Heart right ventricle (tissue), 16 donors: ENCODE measurements at regions of chr17 and their contacts with region 1.

Region 1: GRCh38 chr17:81959362-81960129 is 1.4 kb downstream of the NOTUM start:
- DNase-seq: peak; percentile 48 to 81
- ATAC-seq: peak; percentile 81 to 93 (median 88)
- H3K4me3 ChIP-seq: peak overlapping the region; percentile 25 to 53 (median 40)
- H3K27ac ChIP-seq: no peak overlapping the region
- H3K4me1 ChIP-seq: peaks cover 0 to 24% (median 13%) of the 10 kb centered on the region in 9 donors
- H3K27me3 ChIP-seq: peaks cover 33 to 81% (median 67%) of the 10 kb centered on the region in 7 donors
- CTCF ChIP-seq: peak; percentile 54 to 97 (median 73)

Region 2: GRCh38 chr17:82020891-82021727 is 61.6 kb after region 1 on chr17:
- intact Hi-C with region 1: loop called (anchors 1 to 5 kb)
- DNase-seq: peak; percentile 62 to 71
- ATAC-seq: peak in 5 of 8 donors; percentile 2 to 28 (median 15)
- H3K4me3 ChIP-seq: peak overlapping the region in 4 of 10 donors; percentile 75 to 100 (median 90)
- H3K27ac ChIP-seq: peak overlapping the region in 1 of 10 donors; percentile 87
- H3K4me1 ChIP-seq: peaks cover 19 to 34% (median 29%) of the 10 kb centered on the region in 9 donors
- H3K27me3 ChIP-seq: no peaks in the 10 kb centered on the region
- CTCF ChIP-seq: peak; percentile 47 to 75 (median 67)

Region 3: DNA sequence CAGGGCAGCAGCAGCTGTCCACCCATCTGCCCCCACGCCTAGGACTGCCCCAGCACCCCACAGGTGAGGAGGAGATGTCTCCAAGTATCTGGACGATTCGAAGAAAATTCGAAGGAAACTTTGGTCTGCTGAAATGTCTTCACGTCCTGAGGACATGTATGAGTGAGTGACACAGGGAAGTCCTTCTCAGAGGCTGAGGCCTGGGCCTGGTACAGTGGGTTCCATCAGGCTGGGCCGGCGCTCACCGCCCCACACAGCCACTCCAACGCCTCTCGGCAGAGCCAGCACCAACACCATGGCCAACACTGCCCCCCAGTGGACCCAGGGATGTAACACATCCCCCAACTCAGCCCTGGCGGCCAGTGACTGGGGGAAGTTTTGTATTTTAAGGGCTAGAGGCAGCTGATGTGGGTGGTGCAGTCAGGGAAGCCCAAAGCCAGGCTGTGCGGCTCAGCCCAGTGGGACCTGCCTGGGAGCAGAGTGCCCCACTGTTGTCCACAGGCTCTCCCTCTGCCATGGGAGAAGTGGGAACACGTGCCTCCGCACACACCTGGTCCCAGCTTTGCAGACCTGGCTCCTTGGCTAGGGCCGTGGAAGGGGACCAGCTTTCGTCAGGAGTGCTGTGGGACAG is 194.3 kb after region 1 on chr17:
- intact Hi-C with region 1: loop called (anchors 2 to 10 kb)
- DNase-seq: peak; percentile 70 to 79
- ATAC-seq: peak; percentile 83 to 94 (median 91)
- H3K4me3 ChIP-seq: no peak overlapping the region
- H3K27ac ChIP-seq: no peak overlapping the region
- H3K4me1 ChIP-seq: no peaks in the 10 kb centered on the region
- H3K27me3 ChIP-seq: no peaks in the 10 kb centered on the region
- CTCF ChIP-seq: peak; percentile 81 to 96 (median 88)

Region 4: DNA sequence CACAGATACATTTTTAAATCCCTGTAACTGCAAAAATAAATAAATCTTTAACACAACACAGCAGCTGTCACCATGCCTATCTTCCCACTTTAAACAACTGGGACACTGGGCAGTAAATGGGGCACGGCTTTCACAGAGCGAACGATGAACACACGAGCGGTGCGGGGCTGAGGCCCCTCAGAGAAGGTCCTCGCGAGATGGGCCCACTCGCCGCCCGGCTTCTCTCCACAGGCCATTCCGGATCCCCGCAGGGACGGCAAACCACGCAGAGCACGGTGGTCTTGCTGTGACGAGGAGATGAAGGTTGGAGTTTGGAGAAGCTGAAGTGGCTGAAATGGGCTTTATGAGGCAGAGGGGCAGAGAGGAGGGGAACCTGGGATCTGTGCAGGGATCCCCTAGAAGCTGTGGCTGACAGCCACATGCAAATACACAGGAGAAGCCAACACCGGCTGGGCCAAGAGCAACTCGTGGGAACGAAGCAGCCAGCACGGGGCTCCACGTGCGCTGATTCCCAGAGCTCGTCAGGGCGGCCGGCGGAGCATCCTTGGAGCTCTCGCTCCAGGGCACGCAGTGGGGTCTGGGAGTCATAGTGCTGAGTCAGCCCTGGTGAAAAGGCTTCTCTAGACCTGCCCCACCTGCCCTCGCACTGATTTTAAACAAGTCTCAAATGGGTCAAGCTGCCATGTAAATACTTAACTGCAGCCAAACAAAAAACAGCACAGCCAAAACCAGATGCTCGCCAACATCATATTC is 221.4 kb after region 1 on chr17:
- intact Hi-C with region 1: no loop called
- DNase-seq: no peak
- ATAC-seq: no peak
- H3K4me3 ChIP-seq: no peak overlapping the region
- H3K27ac ChIP-seq: no peak overlapping the region
- H3K4me1 ChIP-seq: no peaks in the 10 kb centered on the region
- H3K27me3 ChIP-seq: no peaks in the 10 kb centered on the region
- CTCF ChIP-seq: no peak